Heart left ventricle (tissue), 16 donors: ENCODE measurements at regions of chr5 and their contacts with region 1.

Region 1: DNA sequence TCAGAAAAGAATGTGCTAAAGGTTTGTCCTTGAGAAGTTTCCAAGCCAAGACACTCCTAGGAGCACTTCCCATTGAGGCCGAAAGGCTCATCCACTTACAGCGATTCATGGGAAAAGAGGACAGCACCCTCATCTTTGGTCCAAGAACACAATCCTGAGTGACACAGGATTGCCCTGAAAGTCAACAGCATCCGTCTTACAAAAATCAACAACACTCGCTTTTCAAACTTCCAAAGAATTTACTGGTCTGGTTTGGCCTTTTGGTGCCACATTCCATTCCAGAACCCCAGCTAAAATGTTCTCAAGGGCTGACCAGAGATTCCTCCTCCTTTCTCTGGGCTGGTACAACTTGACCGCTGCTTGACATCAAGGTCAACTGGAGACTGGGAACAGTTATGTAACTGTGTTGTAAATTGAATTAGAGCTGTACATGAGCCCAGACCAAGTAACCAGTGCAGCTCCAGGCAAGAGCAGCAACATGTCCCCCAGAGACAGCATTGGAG is 415.8 kb upstream of the PIK3R1 start:
- DNase-seq: peak in 4 of 5 donors; percentile 25 to 35 (median 26)
- ATAC-seq: peak; percentile 76 to 93 (median 86)
- H3K4me3 ChIP-seq: no peak overlapping the region
- H3K27ac ChIP-seq: peak overlapping the region in 8 of 12 donors; percentile 22 to 82 (median 59)
- H3K4me1 ChIP-seq: peaks cover 0 to 20% (median 4%) of the 10 kb centered on the region in 12 donors
- H3K27me3 ChIP-seq: no peaks in the 10 kb centered on the region
- CTCF ChIP-seq: no peak
- POLR2A ChIP-seq: no peak

Region 2: GRCh38 chr5:67699560-67699959 is 100.2 kb before region 1 on chr5:
- intact Hi-C with region 1: loop called in 5 of 10 experiments (anchors 5 to 10 kb)
- DNase-seq: no peak
- ATAC-seq: no peak
- H3K4me3 ChIP-seq: no peak overlapping the region
- H3K27ac ChIP-seq: no peak overlapping the region
- H3K4me1 ChIP-seq: peaks cover 0 to 10% (median 8%) of the 10 kb centered on the region in 12 donors
- H3K27me3 ChIP-seq: no peaks in the 10 kb centered on the region
- CTCF ChIP-seq: no peak
- POLR2A ChIP-seq: no peak

Region 3: GRCh38 chr5:68225188-68225910 is 425.6 kb after region 1 on chr5:
- intact Hi-C with region 1: loop called in 1 of 10 experiments (anchors 5 kb)
- DNase-seq: peak in 4 of 5 donors; percentile 61 to 81 (median 62)
- ATAC-seq: peak; percentile 37 to 70 (median 54)
- H3K4me3 ChIP-seq: peak overlapping the region in 5 of 12 donors; percentile 0 to 13 (median 10)
- H3K27ac ChIP-seq: peak overlapping the region; percentile 6 to 75 (median 58)
- H3K4me1 ChIP-seq: peaks cover 8 to 93% (median 85%) of the 10 kb centered on the region in 12 donors
- H3K27me3 ChIP-seq: no peaks in the 10 kb centered on the region
- CTCF ChIP-seq: no peak
- POLR2A ChIP-seq: no peak